Testis (tissue), 5 donors: ENCODE measurements at regions of chr4 and their contacts with region 1.

Region 1: DNA sequence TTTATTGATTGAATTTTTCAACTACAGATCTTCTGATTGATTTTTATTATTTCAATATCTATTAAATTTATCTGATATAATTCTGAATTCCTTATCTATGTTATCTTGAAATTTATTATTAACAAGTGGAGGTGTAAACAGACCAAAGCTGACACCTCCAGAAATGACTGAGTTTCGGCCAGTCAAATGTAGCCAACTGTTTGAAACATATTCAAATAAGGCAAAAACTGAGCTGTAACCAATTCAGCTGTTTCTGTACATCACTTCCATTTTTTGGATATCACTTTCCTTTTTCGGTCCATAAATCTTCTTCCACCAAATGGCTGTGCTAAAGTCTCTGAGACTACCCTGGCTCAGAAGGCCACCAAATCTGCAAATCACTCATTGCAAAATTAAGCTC is 2127.3 kb upstream of the AGA start:
- DNase-seq: no peak
- H3K4me3 ChIP-seq: no peak overlapping the region
- H3K27ac ChIP-seq: no peak overlapping the region
- H3K4me1 ChIP-seq: no peaks in the 10 kb centered on the region
- H3K27me3 ChIP-seq: no peaks in the 10 kb centered on the region
- CTCF ChIP-seq: no peak
- POLR2A ChIP-seq: no peak

Region 2: GRCh38 chr4:179552131-179552530 is 17.4 kb before region 1 on chr4:
- intact Hi-C with region 1: loop called (anchors 1 kb)
- DNase-seq: no peak
- H3K4me3 ChIP-seq: no peak overlapping the region
- H3K27ac ChIP-seq: no peak overlapping the region
- H3K4me1 ChIP-seq: no peaks in the 10 kb centered on the region
- H3K27me3 ChIP-seq: no peaks in the 10 kb centered on the region
- CTCF ChIP-seq: no peak
- POLR2A ChIP-seq: no peak

Region 3: GRCh38 chr4:179836179-179837075 is 266.9 kb after region 1 on chr4:
- intact Hi-C with region 1: no loop called
- DNase-seq: no peak
- H3K4me3 ChIP-seq: no peak overlapping the region
- H3K27ac ChIP-seq: no peak overlapping the region
- H3K4me1 ChIP-seq: no peaks in the 10 kb centered on the region
- H3K27me3 ChIP-seq: no peaks in the 10 kb centered on the region
- CTCF ChIP-seq: no peak
- POLR2A ChIP-seq: no peak